Prostate gland (tissue), 2 donors: ENCODE measurements at regions of chr6 and their contacts with region 1.

Region 1: DNA sequence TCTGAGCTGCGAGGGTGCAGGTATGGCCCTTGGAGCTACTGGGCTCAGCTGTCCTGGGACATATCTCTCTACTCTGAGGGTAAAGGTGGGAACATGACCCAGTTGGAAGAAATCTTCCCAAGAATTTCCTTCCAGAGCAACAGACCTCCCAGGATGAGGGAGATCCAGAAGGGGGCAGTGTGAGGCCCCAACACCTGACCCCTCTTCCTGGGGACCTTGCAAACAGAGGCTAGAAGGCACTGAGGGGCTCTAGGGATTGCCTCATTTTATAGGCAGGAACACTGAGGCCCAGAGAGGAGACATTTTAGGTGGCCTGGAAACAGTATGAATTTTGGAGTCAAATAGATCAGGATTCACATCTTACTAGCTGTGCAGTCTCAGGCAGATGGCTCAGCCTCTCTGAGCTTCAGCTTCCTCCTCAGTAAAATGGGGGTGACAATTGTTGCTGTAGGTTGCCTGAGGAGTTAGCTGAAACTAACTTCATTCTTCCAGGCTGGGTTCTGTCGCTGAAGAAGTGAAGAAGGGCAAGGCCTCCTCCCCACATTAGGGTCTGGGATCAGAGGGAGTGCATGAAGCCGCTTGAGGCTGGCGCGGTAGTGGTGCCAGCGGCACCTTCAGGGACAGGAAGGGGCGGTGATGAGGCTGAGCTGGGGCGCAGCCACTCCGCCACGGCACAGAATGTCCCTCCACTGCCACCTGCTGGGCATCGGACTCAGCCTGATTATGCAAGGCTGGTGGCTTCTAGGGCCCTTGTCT is 11.4 kb downstream of the KCNK17 start:
- DNase-seq: peak; percentile 80
- H3K4me3 ChIP-seq: no peak overlapping the region
- H3K27ac ChIP-seq: no peak overlapping the region
- H3K4me1 ChIP-seq: no peaks in the 10 kb centered on the region
- H3K27me3 ChIP-seq: no peaks in the 10 kb centered on the region
- CTCF ChIP-seq: peak; percentile 77 to 95 (median 92)
- POLR2A ChIP-seq: no peak

Region 2: GRCh38 chr6:38871741-38872568 is 430.9 kb before region 1 on chr6:
- intact Hi-C with region 1: loop called (anchors 5 kb)
- DNase-seq: peak; percentile 33
- H3K4me3 ChIP-seq: no peak overlapping the region
- H3K27ac ChIP-seq: no peak overlapping the region
- H3K4me1 ChIP-seq: no peaks in the 10 kb centered on the region
- H3K27me3 ChIP-seq: no peaks in the 10 kb centered on the region
- CTCF ChIP-seq: peak; percentile 39 to 74 (median 68)
- POLR2A ChIP-seq: no peak

Region 3: DNA sequence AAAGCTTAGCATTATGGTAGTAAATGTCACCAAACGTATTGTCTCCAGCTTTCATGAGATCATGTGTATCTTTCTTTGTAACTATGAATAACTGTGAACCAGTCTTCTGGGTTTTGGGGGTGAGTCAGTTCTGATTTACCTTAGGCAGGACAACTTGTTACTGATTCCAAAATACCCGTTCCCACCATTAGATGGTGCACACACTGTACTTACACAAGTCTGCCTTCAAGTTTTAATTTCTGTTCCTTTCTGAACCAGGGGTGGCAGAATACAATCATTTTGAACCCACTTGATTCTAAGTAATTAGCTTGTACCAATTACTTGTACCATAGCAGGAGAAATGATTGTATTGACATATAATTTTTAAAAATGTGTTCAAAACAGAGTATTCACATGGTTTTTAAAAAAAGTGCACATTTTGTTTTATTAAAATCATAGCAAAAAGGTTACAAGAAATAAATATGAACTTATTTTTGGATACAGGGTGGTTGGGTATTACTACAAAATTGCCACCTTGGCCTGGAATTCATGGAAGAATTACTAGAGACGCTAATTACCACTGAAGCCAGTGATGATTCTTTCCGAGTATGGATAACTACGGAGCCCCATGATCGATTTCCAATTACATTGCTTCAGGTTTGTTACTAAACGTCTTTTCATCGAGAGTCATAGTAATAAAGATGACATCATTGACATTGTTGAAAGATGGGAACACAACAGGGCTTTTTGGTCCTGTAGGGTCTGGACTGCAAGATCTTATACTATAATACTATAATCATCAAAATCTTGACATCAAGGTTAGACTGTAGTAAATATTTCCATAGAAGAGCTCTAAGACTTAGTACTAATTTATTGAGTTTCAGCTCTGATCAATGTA is 329.4 kb before region 1 on chr6:
- intact Hi-C with region 1: loop called (anchors 5 kb)
- DNase-seq: peak; percentile 51
- H3K4me3 ChIP-seq: no peak overlapping the region
- H3K27ac ChIP-seq: no peak overlapping the region
- H3K4me1 ChIP-seq: no peaks in the 10 kb centered on the region
- H3K27me3 ChIP-seq: no peaks in the 10 kb centered on the region
- CTCF ChIP-seq: peak; percentile 22 to 78 (median 57)
- POLR2A ChIP-seq: no peak

Region 4: GRCh38 chr6:39088331-39088730 is 214.5 kb before region 1 on chr6:
- intact Hi-C with region 1: loop called (anchors 10 kb)
- DNase-seq: no peak
- H3K4me3 ChIP-seq: no peak overlapping the region
- H3K27ac ChIP-seq: no peak overlapping the region
- H3K4me1 ChIP-seq: no peaks in the 10 kb centered on the region
- H3K27me3 ChIP-seq: no peaks in the 10 kb centered on the region
- CTCF ChIP-seq: peak in 2 of 4 experiments; percentile 32 to 40
- POLR2A ChIP-seq: no peak

Region 5: GRCh38 chr6:39102071-39102820 is 200.6 kb before region 1 on chr6:
- intact Hi-C with region 1: no loop called
- DNase-seq: no peak
- H3K4me3 ChIP-seq: no peak overlapping the region
- H3K27ac ChIP-seq: no peak overlapping the region
- H3K4me1 ChIP-seq: no peaks in the 10 kb centered on the region
- H3K27me3 ChIP-seq: no peaks in the 10 kb centered on the region
- CTCF ChIP-seq: peak in 1 of 4 experiments; percentile 22
- POLR2A ChIP-seq: no peak

Region 6: GRCh38 chr6:39166189-39166911 is 136.5 kb before region 1 on chr6:
- intact Hi-C with region 1: loop called (anchors 1 kb)
- DNase-seq: peak; percentile 63
- H3K4me3 ChIP-seq: no peak overlapping the region
- H3K27ac ChIP-seq: no peak overlapping the region
- H3K4me1 ChIP-seq: no peaks in the 10 kb centered on the region
- H3K27me3 ChIP-seq: no peaks in the 10 kb centered on the region
- CTCF ChIP-seq: peak; percentile 72 to 93 (median 88)
- POLR2A ChIP-seq: no peak

Region 7: DNA sequence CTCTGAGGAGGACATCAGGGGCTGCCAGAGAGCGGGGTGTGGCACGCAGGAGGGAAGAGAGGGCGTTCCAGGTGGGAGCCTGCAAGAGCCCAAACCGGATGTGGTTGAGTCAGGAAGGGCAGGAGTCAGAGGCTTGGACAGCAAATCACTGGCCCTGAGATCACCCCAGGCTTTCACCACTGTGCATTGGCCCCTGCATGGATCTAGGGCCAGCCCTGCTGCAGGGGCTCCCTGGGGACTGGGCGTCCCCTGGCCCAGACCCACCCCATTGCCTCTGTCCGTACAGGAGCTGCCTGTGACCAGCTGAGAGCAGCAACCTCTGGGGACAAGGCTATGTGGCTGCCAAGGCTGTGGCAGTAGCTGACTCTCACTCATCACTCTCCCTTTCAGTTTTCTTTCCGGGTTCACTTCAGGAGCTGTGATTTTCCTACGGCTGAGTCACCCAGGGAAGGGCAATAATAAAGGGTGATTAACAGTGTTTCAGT is 22.6 kb before region 1 on chr6:
- intact Hi-C with region 1: no loop called
- DNase-seq: no peak
- H3K4me3 ChIP-seq: no peak overlapping the region
- H3K27ac ChIP-seq: no peak overlapping the region
- H3K4me1 ChIP-seq: no peaks in the 10 kb centered on the region
- H3K27me3 ChIP-seq: no peaks in the 10 kb centered on the region
- CTCF ChIP-seq: peak in 1 of 4 experiments; percentile 2
- POLR2A ChIP-seq: no peak